ENCODE measurements at regions of chr10 and their contacts with region 1.

Region 1: GRCh38 chr10:130127364-130128061 is 8.7 kb upstream of the GLRX3 start:
- DNase-seq: peak; percentile 33
- H3K4me3 ChIP-seq: no peak overlapping the region
- H3K27ac ChIP-seq: peak overlapping the region; percentile 11
- H3K27me3 ChIP-seq: peaks cover 14% of the 10 kb centered on the region
- CTCF ChIP-seq: peak; percentile 98

Region 2: GRCh38 chr10:130141878-130142277 is 14.4 kb after region 1 on chr10:
- CTCF ChIA-PET with region 1: interaction called, 22 read pairs
- POLR2A ChIA-PET with region 1: interaction called, 3 read pairs
- DNase-seq: no peak
- H3K4me3 ChIP-seq: no peak overlapping the region
- H3K27ac ChIP-seq: no peak overlapping the region
- H3K27me3 ChIP-seq: no peaks in the 10 kb centered on the region
- CTCF ChIP-seq: no peak

Measured in AG04450 (cell line).